ENCODE measurements at regions of chr3 and their contacts with region 1.

Region 1: DNA sequence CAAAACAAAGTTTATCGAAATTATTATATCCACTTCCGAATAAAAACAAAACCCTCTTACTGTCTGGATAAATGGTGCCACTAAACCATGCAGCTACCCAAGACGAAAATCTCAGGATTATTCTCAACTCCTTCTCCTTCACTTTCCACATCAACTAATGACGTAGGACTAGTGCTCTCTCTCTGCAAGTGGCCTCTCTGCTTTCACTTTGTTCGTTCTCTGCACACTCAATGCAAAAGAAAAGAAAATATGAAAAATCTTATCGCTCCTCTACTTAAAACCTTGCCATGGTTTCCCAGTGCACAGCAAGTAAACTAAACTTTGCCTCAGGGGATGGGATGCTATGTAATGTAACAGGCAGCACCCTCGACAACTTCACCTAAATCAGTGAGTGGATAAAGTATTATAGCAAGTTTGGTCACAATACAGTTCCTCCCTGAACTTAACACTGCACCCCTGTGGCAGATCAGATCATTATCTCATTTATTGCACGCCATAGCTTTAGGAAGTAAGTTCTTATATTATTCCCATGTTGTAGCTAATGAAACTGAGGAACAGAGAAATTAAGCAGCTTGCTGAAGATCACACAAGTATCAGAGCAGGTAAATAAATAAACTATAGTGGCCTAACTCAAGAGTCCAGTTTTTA is 262.7 kb upstream of the GADL1 start:
- DNase-seq: peak; percentile 7 to 14 (median 8)
- H3K4me3 ChIP-seq: peak overlapping the region; percentile 22 to 90 (median 75)
- H3K4me3 Mint-ChIP-seq: peak overlapping the region; percentile 72 to 88
- H3K27ac ChIP-seq: peak overlapping the region in 1 of 2 donors; percentile 72
- H3K27ac Mint-ChIP-seq: peak overlapping the region in 6 of 7 donors; percentile 12 to 72 (median 24)
- H3K4me1 ChIP-seq: no peaks in the 10 kb centered on the region
- H3K4me1 Mint-ChIP-seq: peaks cover 8% of the 10 kb centered on the region
- H3K27me3 ChIP-seq: no peaks in the 10 kb centered on the region
- H3K27me3 Mint-ChIP-seq: peaks cover 0 to 3% (median 2%) of the 10 kb centered on the region in 3 donors
- CTCF ChIP-seq: peak; percentile 11

Region 2: DNA sequence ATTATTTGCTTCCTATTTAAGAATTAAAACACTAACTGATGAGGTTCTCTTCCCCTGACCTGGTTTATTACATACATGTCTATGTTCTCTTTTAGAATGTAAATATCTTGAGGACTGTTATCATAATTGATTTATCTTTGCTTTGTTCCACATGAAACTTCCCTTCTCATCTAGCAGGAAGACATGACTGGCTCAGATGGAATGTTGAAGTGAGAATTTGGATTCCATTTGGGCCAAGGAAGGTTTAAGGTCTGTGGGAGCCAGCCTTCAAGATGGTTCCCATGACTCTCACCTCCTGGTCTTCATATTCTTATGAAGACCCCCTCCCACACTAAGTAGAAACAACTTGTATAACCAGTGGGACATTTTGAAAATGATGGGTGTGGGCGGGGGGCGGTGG is 40.5 kb before region 1 on chr3:
- intact Hi-C with region 1: no loop called
- DNase-seq: no peak
- H3K4me3 ChIP-seq: no peak overlapping the region
- H3K4me3 Mint-ChIP-seq: no peak overlapping the region
- H3K27ac ChIP-seq: no peak overlapping the region
- H3K27ac Mint-ChIP-seq: no peak overlapping the region
- H3K4me1 ChIP-seq: no peaks in the 10 kb centered on the region
- H3K4me1 Mint-ChIP-seq: no peaks in the 10 kb centered on the region
- H3K27me3 ChIP-seq: no peaks in the 10 kb centered on the region
- H3K27me3 Mint-ChIP-seq: no peaks in the 10 kb centered on the region
- CTCF ChIP-seq: no peak

Region 3: GRCh38 chr3:31181666-31182065 is 24.5 kb after region 1 on chr3:
- intact Hi-C with region 1: loop called in 1 of 2 experiments (anchors 2 kb)
- DNase-seq: no peak
- H3K4me3 ChIP-seq: no peak overlapping the region
- H3K4me3 Mint-ChIP-seq: no peak overlapping the region
- H3K27ac ChIP-seq: no peak overlapping the region
- H3K27ac Mint-ChIP-seq: peak overlapping the region in 1 of 7 donors; percentile 45
- H3K4me1 ChIP-seq: peaks cover 6% of the 10 kb centered on the region in 2 donors
- H3K4me1 Mint-ChIP-seq: peaks cover 11% of the 10 kb centered on the region
- H3K27me3 ChIP-seq: no peaks in the 10 kb centered on the region
- H3K27me3 Mint-ChIP-seq: no peaks in the 10 kb centered on the region
- CTCF ChIP-seq: no peak

Region 4: DNA sequence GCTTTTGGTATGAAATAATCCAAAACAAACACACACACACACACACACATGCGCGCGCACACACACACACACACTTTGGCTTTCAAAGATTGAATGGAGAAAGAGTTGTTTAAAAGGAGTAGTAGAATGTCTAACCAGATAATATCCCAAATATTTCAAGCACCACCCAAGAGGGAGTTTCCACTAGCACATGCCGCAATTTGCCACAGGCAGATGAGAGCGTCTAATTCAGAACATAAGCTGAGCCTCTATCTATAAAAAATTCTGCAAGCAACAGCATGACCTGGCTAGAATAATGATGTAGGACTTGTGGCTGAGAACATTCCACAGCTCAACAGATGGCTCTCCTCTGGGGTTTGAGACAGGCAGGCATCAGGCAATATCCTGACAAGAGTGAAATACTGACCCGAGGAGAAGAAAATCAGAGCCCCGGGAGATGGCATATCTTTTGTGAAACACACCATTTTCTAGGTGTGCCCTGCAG is 39.8 kb after region 1 on chr3:
- intact Hi-C with region 1: no loop called
- DNase-seq: no peak
- H3K4me3 ChIP-seq: no peak overlapping the region
- H3K4me3 Mint-ChIP-seq: no peak overlapping the region
- H3K27ac ChIP-seq: no peak overlapping the region
- H3K27ac Mint-ChIP-seq: no peak overlapping the region
- H3K4me1 ChIP-seq: no peaks in the 10 kb centered on the region
- H3K4me1 Mint-ChIP-seq: no peaks in the 10 kb centered on the region
- H3K27me3 ChIP-seq: no peaks in the 10 kb centered on the region
- H3K27me3 Mint-ChIP-seq: no peaks in the 10 kb centered on the region
- CTCF ChIP-seq: no peak